ENCODE measurements at regions of chr9 and their contacts with region 1.

Region 1: GRCh38 chr9:122370869-122371755 is at the start of gene PTGS1:
- DNase-seq: peak in 3 of 4 donors; percentile 41 to 90 (median 72)
- ATAC-seq: peak; percentile 89
- H3K4me3 ChIP-seq: peak within 1 kb of the TSS; percentile 24 to 43
- H3K27ac ChIP-seq: peak within 1 kb of the TSS in 1 of 2 donors; percentile 74
- H3K4me1 ChIP-seq: peaks cover 8 to 30% of the 10 kb centered on the region in 2 donors
- H3K27me3 ChIP-seq: peaks cover 0 to 13% of the 10 kb centered on the region in 2 donors
- CTCF ChIP-seq: no peak
- polyA plus RNA-seq, gene PTGS1: 3.8 to 5.4 (median 4.3) TPM

Region 2: GRCh38 chr9:122218935-122219855 is 151.9 kb before region 1 on chr9:
- intact Hi-C with region 1: no loop called
- DNase-seq: no peak
- ATAC-seq: no peak
- H3K4me3 ChIP-seq: no peak overlapping the region
- H3K27ac ChIP-seq: no peak overlapping the region
- H3K4me1 ChIP-seq: peaks cover 17 to 22% of the 10 kb centered on the region in 2 donors
- H3K27me3 ChIP-seq: peaks cover 79 to 100% of the 10 kb centered on the region in 2 donors
- CTCF ChIP-seq: no peak

Region 3: DNA sequence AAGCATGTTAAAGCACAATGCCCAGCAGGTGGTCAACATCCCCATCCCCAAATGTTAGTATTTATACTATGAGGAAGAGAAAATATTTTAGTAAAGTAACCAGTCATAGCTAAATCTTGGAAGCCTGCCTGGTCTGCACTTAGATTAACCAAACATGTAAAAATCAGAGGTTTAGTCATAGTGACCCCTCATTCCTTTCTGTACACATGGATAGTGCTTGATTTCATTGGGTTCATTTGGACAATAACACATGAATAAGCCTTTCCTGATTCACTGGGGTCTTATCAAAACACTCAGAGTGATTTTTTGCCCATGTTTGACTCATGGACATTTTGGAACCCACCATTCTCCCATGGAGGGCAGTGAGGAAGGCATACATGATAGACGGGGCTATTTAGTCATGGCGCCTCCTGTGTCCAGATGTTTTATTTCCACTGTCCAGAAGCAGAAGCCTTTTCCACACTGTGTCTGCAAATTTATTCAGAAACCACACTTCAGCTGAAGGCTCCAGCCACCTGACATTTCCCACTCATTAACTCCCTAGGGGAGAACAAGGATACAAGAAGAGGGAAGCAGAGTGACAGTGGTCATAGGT is 74.1 kb after region 1 on chr9:
- intact Hi-C with region 1: loop called in 1 of 2 experiments (anchors 10 kb)
- DNase-seq: no peak
- ATAC-seq: peak; percentile 30
- H3K4me3 ChIP-seq: no peak overlapping the region
- H3K27ac ChIP-seq: no peak overlapping the region
- H3K4me1 ChIP-seq: no peaks in the 10 kb centered on the region
- H3K27me3 ChIP-seq: peaks cover 0 to 5% of the 10 kb centered on the region in 2 donors
- CTCF ChIP-seq: no peak

Measured in left lung (tissue), 14 donors.